ENCODE measurements at regions of chr22 and their contacts with region 1.

Region 1: DNA sequence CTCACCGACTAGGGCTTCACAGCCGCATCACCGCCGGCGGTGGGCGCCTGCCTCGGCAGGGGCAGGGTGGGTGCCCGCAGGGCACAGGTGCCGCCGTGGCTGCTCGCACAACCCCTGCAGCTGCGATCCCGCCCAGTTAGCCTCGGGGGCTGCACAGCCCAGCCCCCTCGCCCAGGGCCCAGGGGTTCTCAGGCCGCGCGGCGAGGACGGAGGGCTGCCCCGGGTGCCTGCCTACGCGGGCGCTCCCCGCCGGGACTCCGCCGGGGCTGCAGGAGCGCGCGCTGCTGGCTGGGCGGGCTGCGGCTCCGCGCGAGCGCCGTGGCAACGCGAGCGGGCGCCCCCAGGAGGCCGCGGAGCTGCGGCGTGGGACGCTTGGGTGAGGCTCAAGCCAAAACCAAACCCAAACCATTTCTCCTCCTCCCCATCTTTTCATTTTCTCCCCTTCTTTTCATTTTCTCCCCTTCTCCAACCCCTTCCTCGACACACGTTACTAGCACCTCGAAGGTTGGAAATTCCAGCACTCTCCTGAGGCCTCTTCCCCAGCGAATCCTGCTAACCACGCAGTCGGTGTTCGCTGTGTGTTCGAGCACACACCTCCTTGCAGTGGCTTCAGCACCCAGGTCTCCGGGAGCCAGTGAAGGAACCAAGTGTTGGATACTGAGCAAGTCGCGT is at the start of gene MICAL3:
- DNase-seq: peak; percentile 76
- ATAC-seq: peak; percentile 91
- total RNA-seq, gene MICAL3: 78.9 TPM

Region 2: GRCh38 chr22:17518406-17518805 is 506.0 kb before region 1 on chr22:
- intact Hi-C with region 1: no loop called
- DNase-seq: no peak
- ATAC-seq: no peak

Region 3: DNA sequence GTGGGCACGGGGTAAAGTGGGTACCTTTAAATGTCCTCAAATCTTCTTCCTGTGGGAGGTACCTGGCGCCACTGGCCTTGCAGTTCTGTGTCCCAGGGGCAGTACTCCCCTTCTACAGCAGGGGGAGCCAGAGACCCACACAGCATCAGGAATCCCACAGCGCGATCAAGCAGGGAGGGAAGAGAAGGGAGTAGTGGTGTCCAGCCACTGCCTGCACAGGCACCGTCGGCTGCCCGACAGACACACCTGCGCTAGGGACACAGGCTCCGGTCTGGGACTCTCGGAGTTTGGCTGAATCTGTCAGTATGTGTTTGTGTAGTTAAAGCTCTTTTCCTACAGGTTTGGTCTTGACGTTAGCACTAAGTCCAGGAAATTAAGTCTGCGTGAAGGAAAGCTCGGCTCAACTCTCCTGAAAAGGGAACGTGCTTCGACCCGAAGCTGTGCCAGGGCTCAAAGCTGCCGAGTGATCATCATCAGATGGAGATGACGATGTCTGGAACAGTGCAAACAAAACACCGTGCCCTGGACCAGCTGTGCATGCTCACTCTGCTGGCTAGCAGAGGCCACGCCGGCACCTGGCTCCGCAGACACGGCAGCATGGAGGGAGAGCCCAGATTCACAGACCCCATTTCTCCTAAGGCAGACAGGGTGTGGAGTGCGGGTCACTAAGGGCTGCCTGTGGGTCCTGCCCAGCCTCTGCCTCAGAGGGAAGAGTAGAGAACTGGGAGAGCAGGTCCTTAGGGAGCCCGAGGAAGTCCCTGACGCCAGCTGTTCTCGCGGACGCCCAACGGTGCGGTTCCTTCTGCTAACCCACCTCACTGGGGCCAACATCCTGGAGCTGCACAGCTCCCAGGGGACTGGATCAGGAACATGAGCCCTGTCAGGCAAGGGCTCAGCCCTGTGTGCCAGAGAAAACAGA is 194.1 kb before region 1 on chr22:
- intact Hi-C with region 1: loop called (anchors 2 kb)
- DNase-seq: peak; percentile 87
- ATAC-seq: peak; percentile 84

Region 4: GRCh38 chr22:17897858-17898257 is 126.6 kb before region 1 on chr22:
- intact Hi-C with region 1: loop called (anchors 5 kb)
- DNase-seq: no peak
- ATAC-seq: no peak

Region 5: DNA sequence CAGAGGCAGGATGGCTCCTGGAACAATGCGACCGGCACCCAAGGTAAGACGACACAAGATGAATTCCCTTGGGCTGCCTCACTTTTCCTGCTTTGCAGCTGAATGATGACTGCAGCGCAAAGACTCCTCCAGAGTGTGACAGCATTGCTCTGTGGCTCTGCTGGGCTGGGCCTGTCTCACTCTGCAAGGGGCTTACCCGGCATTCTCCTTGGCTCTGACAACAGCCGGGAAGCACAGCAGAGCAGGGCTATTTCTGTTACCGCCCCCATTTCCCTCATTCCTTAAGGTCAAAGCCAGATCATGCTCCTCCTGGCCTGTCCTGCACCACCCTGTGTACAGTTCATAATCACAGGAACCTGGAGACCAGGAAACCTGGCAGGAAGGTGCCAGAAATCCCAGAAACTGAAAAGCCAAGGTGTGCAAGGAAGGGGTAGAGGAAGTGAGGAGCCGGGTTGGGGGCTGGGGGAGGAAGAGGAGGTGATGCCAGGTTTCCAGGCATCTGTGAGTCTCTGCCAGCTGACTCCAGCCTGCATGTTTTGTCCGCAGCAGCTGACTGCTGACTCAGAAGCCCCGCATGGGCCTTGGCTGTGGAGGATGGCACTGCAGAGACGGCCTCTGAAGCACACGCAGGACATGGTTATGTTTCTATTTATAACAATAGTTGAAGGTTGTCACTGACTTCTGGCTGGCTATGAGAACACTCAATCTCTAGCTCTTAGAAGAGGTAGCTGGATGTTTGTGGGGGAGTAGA is 113.7 kb before region 1 on chr22:
- intact Hi-C with region 1: loop called (anchors 5 kb)
- DNase-seq: peak; percentile 84
- ATAC-seq: peak; percentile 86

Region 6: GRCh38 chr22:18070556-18071306 is 46.3 kb after region 1 on chr22:
- intact Hi-C with region 1: no loop called
- DNase-seq: no peak
- ATAC-seq: no peak

Measured in Right ventricle myocardium superior (tissue), 1 donor.